Activated B cell treated with CpG ODN at 0.5 μM for 24 hours (primary cell): ENCODE measurements at regions of chr13 and their contacts with region 1.

Region 1: DNA sequence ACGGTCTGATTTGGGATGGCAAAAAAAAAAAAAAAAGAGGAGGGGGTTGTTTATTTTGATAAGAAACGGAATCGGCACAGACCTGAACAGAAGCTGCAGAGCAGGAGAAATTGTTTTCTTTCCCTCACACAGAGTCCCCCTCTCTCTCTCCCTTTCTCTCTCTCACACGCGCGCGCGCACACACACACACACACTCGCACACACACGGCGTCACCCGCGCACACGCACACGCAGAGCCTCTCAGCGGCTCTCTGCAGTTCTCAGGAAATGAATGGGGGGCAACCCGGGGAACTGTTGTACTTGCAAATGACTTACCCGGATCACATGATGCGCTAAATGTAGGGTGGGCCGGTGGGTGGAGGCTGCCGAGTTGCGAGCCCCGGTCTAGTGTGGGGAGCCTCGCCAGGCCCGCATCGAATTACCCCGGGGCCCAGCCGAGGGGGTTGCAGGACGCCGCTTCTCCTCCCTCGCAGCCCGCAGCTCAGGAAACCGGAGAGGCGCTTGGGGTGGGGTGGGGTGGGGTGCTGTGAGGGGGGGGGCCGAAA is 475 bp downstream of the KLF12 start:
- DNase-seq: peak; percentile 79
- ATAC-seq: peak; percentile 51
- H3K4me3 Mint-ChIP-seq: no peak overlapping the region
- H3K27ac Mint-ChIP-seq: peak overlapping the region; percentile 98
- H3K4me1 Mint-ChIP-seq: peaks cover 39% of the 10 kb centered on the region
- H3K27me3 Mint-ChIP-seq: no peaks in the 10 kb centered on the region
- CTCF ChIP-seq: no peak

Region 2: DNA sequence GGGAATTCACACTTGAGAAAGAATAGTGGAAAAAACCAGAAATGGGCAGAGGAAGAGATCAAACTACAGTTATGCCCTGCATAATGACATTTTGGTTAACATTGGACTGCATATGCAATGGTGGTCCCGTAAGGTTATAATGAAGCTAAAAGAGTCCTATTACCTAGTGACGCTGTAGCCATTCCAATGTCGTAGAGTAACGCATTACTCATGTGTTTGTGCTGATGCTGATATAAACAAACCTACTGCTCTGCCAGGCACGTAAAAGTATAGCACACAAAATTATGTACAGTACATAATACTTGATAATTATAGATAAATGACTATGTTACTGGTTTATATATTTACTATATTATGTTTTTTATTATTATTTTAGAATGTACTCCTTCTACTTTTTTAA is 953.8 kb before region 1 on chr13:
- CTCF ChIA-PET with region 1: no interaction called
- POLR2A ChIA-PET with region 1: no interaction called
- intact Hi-C with region 1: no loop called
- DNase-seq: no peak
- ATAC-seq: no peak
- H3K4me3 Mint-ChIP-seq: no peak overlapping the region
- H3K27ac Mint-ChIP-seq: no peak overlapping the region
- H3K4me1 Mint-ChIP-seq: no peaks in the 10 kb centered on the region
- H3K27me3 Mint-ChIP-seq: no peaks in the 10 kb centered on the region
- CTCF ChIP-seq: no peak

Region 3: DNA sequence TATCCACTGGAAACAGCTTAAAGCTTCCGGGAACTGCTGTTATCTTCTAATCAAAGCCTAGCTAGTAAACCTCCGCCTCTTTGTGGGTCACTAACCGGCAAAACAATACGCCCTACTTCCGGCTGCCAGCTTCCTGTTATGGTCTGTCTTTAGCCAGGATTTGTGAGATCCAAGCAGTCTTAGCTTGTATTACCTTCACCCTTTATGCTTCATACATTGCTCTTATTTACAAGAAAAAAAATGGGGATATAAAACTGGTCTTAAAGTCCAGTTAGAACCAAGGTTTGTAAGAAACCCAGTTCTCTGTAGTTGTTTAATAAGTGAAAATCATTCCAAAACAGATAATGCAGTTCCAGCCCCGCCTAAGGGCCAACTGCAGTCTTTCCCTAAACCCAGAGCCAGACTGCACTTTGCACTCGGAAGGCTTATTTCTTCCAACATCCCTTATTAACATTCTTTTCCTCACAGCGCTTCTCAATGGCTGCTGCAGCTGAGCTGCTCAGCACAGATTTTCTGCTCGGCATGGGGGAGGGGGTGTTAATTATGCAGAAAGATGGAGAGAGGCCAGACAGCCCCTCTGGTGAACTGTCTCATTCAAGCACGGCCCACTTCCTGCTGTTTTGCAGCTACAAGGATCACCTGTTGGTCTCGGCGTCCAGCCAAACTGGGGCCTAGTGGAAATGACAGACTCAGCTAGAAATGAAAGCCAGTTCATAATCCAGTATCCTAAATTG is 367.9 kb before region 1 on chr13:
- CTCF ChIA-PET with region 1: no interaction called
- POLR2A ChIA-PET with region 1: interaction called, 12 read pairs
- intact Hi-C with region 1: loop called (anchors 2 kb)
- DNase-seq: peak; percentile 19
- ATAC-seq: peak; percentile 80
- H3K4me3 Mint-ChIP-seq: peak overlapping the region; percentile 63
- H3K27ac Mint-ChIP-seq: peak overlapping the region; percentile 92
- H3K4me1 Mint-ChIP-seq: peaks cover 72% of the 10 kb centered on the region
- H3K27me3 Mint-ChIP-seq: no peaks in the 10 kb centered on the region
- CTCF ChIP-seq: no peak

Region 4: DNA sequence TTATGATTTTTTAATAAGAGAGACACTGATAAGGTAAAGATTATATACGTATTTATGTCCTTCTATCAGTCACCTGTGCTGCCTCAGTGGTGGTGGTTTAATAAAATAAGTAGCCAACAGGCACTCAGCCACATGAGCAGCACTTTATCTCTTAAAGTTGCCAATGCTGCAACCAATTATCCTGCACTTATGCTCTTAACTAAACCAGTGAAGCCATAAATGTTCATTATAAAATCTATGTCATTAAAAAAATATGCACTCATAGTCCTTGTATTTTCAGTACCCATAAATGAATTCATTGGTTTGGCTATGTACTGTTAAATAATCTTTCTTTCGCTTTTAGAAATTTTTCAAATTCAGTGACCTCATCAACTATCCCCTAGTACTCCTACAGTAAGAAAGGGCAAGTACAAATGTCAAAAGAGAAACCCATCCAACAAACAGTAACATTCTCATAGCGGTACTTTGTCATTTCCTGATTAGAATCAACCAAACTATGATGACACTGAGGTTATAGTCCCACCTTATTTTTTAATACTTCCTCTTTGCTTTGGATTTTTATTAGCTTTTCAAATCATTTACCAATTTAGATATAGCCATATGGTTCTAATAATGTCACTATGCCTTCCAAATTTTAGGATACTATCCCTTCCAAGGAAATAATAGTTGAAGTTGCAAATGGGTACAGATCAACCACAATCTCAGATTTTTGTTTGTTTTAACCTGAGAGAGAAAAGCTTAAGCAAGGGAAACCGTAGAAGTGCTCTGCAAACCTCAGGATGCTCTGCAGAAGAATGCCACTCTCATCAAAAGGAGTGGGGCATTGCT is 190.4 kb before region 1 on chr13:
- CTCF ChIA-PET with region 1: no interaction called
- POLR2A ChIA-PET with region 1: interaction called, 7 read pairs
- intact Hi-C with region 1: loop called (anchors 1 kb)
- DNase-seq: no peak
- ATAC-seq: peak; percentile 84
- H3K4me3 Mint-ChIP-seq: peak overlapping the region; percentile 13
- H3K27ac Mint-ChIP-seq: peak overlapping the region; percentile 59
- H3K4me1 Mint-ChIP-seq: peaks cover 36% of the 10 kb centered on the region
- H3K27me3 Mint-ChIP-seq: no peaks in the 10 kb centered on the region
- CTCF ChIP-seq: no peak

Region 5: GRCh38 chr13:74062933-74063332 is 70.8 kb before region 1 on chr13:
- CTCF ChIA-PET with region 1: interaction called, 3 read pairs
- POLR2A ChIA-PET with region 1: interaction called, 37 read pairs
- intact Hi-C with region 1: loop called (anchors 1 kb)
- DNase-seq: no peak
- ATAC-seq: peak; percentile 69
- H3K4me3 Mint-ChIP-seq: peak overlapping the region; percentile 77
- H3K27ac Mint-ChIP-seq: peak overlapping the region; percentile 88
- H3K4me1 Mint-ChIP-seq: peaks cover 86% of the 10 kb centered on the region
- H3K27me3 Mint-ChIP-seq: no peaks in the 10 kb centered on the region
- CTCF ChIP-seq: no peak

Region 6: GRCh38 chr13:74325106-74325505 is 191.4 kb after region 1 on chr13:
- CTCF ChIA-PET with region 1: no interaction called
- POLR2A ChIA-PET with region 1: no interaction called
- intact Hi-C with region 1: no loop called
- DNase-seq: no peak
- ATAC-seq: no peak
- H3K4me3 Mint-ChIP-seq: no peak overlapping the region
- H3K27ac Mint-ChIP-seq: no peak overlapping the region
- H3K4me1 Mint-ChIP-seq: no peaks in the 10 kb centered on the region
- H3K27me3 Mint-ChIP-seq: peaks cover 13% of the 10 kb centered on the region
- CTCF ChIP-seq: no peak

Region 7: GRCh38 chr13:74560325-74560724 is 426.6 kb after region 1 on chr13:
- CTCF ChIA-PET with region 1: no interaction called
- POLR2A ChIA-PET with region 1: no interaction called
- intact Hi-C with region 1: loop called (anchors 10 kb)
- DNase-seq: no peak
- ATAC-seq: no peak
- H3K4me3 Mint-ChIP-seq: no peak overlapping the region
- H3K27ac Mint-ChIP-seq: no peak overlapping the region
- H3K4me1 Mint-ChIP-seq: peaks cover 27% of the 10 kb centered on the region
- H3K27me3 Mint-ChIP-seq: no peaks in the 10 kb centered on the region
- CTCF ChIP-seq: no peak